Calu3 (cell line): ENCODE measurements at regions of chr1 and their contacts with region 1.

Region 1: GRCh38 chr1:185541871-185542301 is 192.3 kb upstream of the HMCN1 start:
- DNase-seq: no peak
- H3K4me3 Mint-ChIP-seq: no peak overlapping the region
- H3K27ac Mint-ChIP-seq: no peak overlapping the region
- H3K4me1 Mint-ChIP-seq: peaks cover 19% of the 10 kb centered on the region
- H3K27me3 Mint-ChIP-seq: no peaks in the 10 kb centered on the region
- CTCF ChIP-seq: no peak

Region 2: DNA sequence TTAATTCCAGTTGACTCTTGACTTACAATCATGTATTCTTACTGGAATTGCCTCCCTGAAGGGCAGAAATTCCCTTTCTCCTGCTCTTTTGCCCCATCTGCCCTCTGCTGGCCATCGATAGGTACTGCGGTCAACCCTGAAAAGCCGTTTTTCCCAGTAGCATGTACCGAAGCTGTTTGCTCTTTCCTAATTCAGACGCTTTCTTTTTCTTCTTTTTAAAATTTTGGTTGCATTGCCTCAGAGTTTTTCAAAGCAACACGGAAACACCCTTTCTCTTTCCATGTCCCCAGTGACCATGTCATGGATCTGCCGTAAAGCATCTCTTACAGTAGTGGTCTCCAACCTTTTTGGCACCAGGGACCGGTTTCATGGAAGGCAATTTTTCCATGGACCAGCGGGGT is 1319.2 kb before region 1 on chr1:
- CTCF ChIA-PET with region 1: no interaction called
- intact Hi-C with region 1: no loop called
- DNase-seq: peak; percentile 78
- H3K4me3 Mint-ChIP-seq: peak overlapping the region; percentile 39
- H3K27ac Mint-ChIP-seq: no peak overlapping the region
- H3K4me1 Mint-ChIP-seq: no peaks in the 10 kb centered on the region
- H3K27me3 Mint-ChIP-seq: peaks cover 27% of the 10 kb centered on the region
- CTCF ChIP-seq: peak; percentile 97

Region 3: GRCh38 chr1:184941735-184942134 is 600.2 kb before region 1 on chr1:
- CTCF ChIA-PET with region 1: no interaction called
- intact Hi-C with region 1: no loop called
- DNase-seq: no peak
- H3K4me3 Mint-ChIP-seq: no peak overlapping the region
- H3K27ac Mint-ChIP-seq: no peak overlapping the region
- H3K4me1 Mint-ChIP-seq: no peaks in the 10 kb centered on the region
- H3K27me3 Mint-ChIP-seq: no peaks in the 10 kb centered on the region
- CTCF ChIP-seq: no peak

Region 4: GRCh38 chr1:185497177-185497576 is 44.7 kb before region 1 on chr1:
- CTCF ChIA-PET with region 1: interaction called, 16 read pairs
- intact Hi-C with region 1: no loop called
- DNase-seq: no peak
- H3K4me3 Mint-ChIP-seq: no peak overlapping the region
- H3K27ac Mint-ChIP-seq: no peak overlapping the region
- H3K4me1 Mint-ChIP-seq: peaks cover 8% of the 10 kb centered on the region
- H3K27me3 Mint-ChIP-seq: no peaks in the 10 kb centered on the region
- CTCF ChIP-seq: no peak

Region 5: DNA sequence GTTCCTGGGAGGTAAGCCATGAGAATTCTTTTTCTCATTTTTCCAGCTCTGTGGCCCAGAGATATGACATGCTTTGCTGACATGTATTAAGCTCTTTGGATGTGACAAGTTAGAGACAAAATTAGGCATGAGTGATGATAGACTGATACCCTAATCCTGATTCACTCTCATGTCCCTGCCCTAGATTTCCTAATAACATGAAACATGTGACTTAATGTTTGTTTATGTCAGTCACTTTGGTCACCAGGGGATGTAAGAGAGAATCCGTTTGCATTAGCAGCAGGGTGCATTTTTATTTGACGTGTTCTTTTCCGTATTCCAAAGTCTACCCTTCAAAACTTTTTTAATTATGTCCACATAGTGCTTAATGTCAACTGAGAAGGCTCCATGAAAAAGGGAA is 384.7 kb after region 1 on chr1:
- CTCF ChIA-PET with region 1: no interaction called
- intact Hi-C with region 1: no loop called
- DNase-seq: no peak
- H3K4me3 Mint-ChIP-seq: no peak overlapping the region
- H3K27ac Mint-ChIP-seq: no peak overlapping the region
- H3K4me1 Mint-ChIP-seq: no peaks in the 10 kb centered on the region
- H3K27me3 Mint-ChIP-seq: no peaks in the 10 kb centered on the region
- CTCF ChIP-seq: no peak